ENCODE measurements at regions of chr5 and their contacts with region 1.

Region 1: GRCh38 chr5:138575194-138576015 is at the start of gene HSPA9:
- DNase-seq: peak; percentile 100
- H3K4me3 ChIP-seq: peak within 1 kb of the TSS; percentile 89 to 100 (median 100)
- H3K27ac ChIP-seq: peak within 1 kb of the TSS; percentile 97
- H3K4me1 ChIP-seq: peaks cover 10% of the 10 kb centered on the region
- H3K27me3 ChIP-seq: no peaks in the 10 kb centered on the region
- CTCF ChIP-seq: no peak
- POLR2A ChIP-seq: peak; percentile 76
- total RNA-seq, gene HSPA9: 180 and 192 TPM in 2 replicates

Region 2: GRCh38 chr5:138128334-138128733 is 447.1 kb before region 1 on chr5:
- CTCF ChIA-PET with region 1: no interaction called
- POLR2A ChIA-PET with region 1: no interaction called
- dilution Hi-C with region 1: no loop called
- intact Hi-C with region 1: no loop called
- DNase-seq: peak; percentile 70
- H3K4me3 ChIP-seq: no peak overlapping the region
- H3K27ac ChIP-seq: no peak overlapping the region
- H3K4me1 ChIP-seq: peaks cover 8% of the 10 kb centered on the region
- H3K27me3 ChIP-seq: no peaks in the 10 kb centered on the region
- CTCF ChIP-seq: no peak
- POLR2A ChIP-seq: no peak

Region 3: GRCh38 chr5:138542956-138543729 is 32.3 kb before region 1 on chr5 and contains the start of gene ETF1:
- CTCF ChIA-PET with region 1: interaction called, 8 read pairs
- POLR2A ChIA-PET with region 1: interaction called, 5 read pairs
- dilution Hi-C with region 1: no loop called
- intact Hi-C with region 1: loop called (anchors 1 kb)
- DNase-seq: peak; percentile 100
- H3K4me3 ChIP-seq: peak within 1 kb of the TSS; percentile 79 to 95 (median 82)
- H3K27ac ChIP-seq: peak within 1 kb of the TSS; percentile 100
- H3K4me1 ChIP-seq: peaks cover 33% of the 10 kb centered on the region
- H3K27me3 ChIP-seq: no peaks in the 10 kb centered on the region
- CTCF ChIP-seq: no peak
- POLR2A ChIP-seq: no peak
- total RNA-seq, gene ETF1: 103 and 114 TPM in 2 replicates

Region 4: DNA sequence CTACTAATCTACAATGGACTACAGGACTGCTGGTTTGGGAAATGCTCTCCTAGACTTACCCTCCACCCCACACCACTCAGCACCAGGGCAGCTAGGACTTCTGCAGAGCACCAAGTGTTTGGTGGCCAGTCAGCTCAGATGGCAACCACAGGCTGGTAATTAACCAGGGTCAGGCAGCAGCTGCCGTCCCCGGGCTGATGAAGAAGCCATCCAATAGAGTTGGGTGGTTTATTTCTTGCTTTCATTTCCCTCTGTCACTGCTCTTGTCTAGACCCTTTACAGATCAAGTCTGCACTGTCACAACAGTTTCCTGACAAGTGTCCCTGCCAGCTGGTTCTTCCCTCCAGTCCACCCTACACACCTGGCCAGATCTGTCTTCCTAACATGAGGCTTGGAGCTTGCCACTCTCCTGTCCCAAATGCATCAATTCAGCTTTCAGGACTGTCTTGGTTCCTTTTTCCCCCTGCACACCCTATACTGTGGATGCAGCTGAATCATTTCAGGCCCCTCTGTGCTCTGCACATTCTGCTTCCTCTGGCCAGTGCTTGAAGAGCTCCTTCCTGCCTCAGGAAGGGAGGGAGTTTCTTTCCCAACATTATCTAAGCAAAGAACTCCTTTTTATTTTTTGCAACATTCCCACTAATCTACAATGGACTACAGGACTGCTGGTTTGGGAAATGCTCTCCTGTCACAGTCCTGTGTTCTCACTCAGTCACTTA is 30.0 kb after region 1 on chr5:
- CTCF ChIA-PET with region 1: interaction called, 22 read pairs
- POLR2A ChIA-PET with region 1: interaction called, 3 read pairs
- dilution Hi-C with region 1: no loop called
- intact Hi-C with region 1: loop called (anchors 2 kb)
- DNase-seq: peak; percentile 13
- H3K4me3 ChIP-seq: no peak overlapping the region
- H3K27ac ChIP-seq: no peak overlapping the region
- H3K4me1 ChIP-seq: peaks cover 7% of the 10 kb centered on the region
- H3K27me3 ChIP-seq: peaks cover 5 to 22% of the 10 kb centered on the region in 2 experiments
- CTCF ChIP-seq: no peak
- POLR2A ChIP-seq: no peak

Region 5: GRCh38 chr5:138641547-138642298 is 66.3 kb after region 1 on chr5:
- CTCF ChIA-PET with region 1: interaction called, 22 read pairs
- POLR2A ChIA-PET with region 1: no interaction called
- dilution Hi-C with region 1: no loop called
- intact Hi-C with region 1: no loop called
- DNase-seq: peak; percentile 64
- H3K4me3 ChIP-seq: no peak overlapping the region
- H3K27ac ChIP-seq: no peak overlapping the region
- H3K4me1 ChIP-seq: no peaks in the 10 kb centered on the region
- H3K27me3 ChIP-seq: peaks cover 0 to 6% of the 10 kb centered on the region in 2 experiments
- CTCF ChIP-seq: peak; percentile 79 to 86
- POLR2A ChIP-seq: no peak

Region 6: GRCh38 chr5:138752951-138753793 is 177.8 kb after region 1 on chr5 and contains the start of gene CTNNA1:
- CTCF ChIA-PET with region 1: interaction called, 4 read pairs
- POLR2A ChIA-PET with region 1: no interaction called
- dilution Hi-C with region 1: no loop called
- intact Hi-C with region 1: loop called (anchors 1 kb)
- DNase-seq: peak; percentile 61
- H3K4me3 ChIP-seq: peak within 1 kb of the TSS; percentile 72 to 94 (median 86)
- H3K27ac ChIP-seq: peak within 1 kb of the TSS; percentile 97
- H3K4me1 ChIP-seq: peaks cover 14% of the 10 kb centered on the region
- H3K27me3 ChIP-seq: no peaks in the 10 kb centered on the region
- CTCF ChIP-seq: no peak
- POLR2A ChIP-seq: peak; percentile 89
- total RNA-seq, gene CTNNA1: 394 and 420 TPM in 2 replicates

Region 7: GRCh38 chr5:139262742-139263445 is 687.5 kb after region 1 on chr5:
- CTCF ChIA-PET with region 1: interaction called, 59 read pairs
- POLR2A ChIA-PET with region 1: no interaction called
- dilution Hi-C with region 1: no loop called
- intact Hi-C with region 1: loop called (anchors 1 kb)
- DNase-seq: peak; percentile 87
- H3K4me3 ChIP-seq: no peak overlapping the region
- H3K27ac ChIP-seq: no peak overlapping the region
- H3K4me1 ChIP-seq: no peaks in the 10 kb centered on the region
- H3K27me3 ChIP-seq: peaks cover 2 to 10% of the 10 kb centered on the region in 2 experiments
- CTCF ChIP-seq: peak; percentile 87 to 88
- POLR2A ChIP-seq: no peak

Measured in endothelial cell of umbilical vein (primary cell).